ENCODE measurements at regions of chr15 and their contacts with region 1.

Region 1: GRCh38 chr15:78625606-78626280 is 4.9 kb upstream of the CHRNA3 start:
- DNase-seq: no peak
- H3K4me3 ChIP-seq: no peak overlapping the region
- H3K27ac ChIP-seq: no peak overlapping the region
- H3K4me1 ChIP-seq: no peaks in the 10 kb centered on the region
- H3K27me3 ChIP-seq: no peaks in the 10 kb centered on the region
- CTCF ChIP-seq: no peak
- EP300 ChIP-seq: no peak
- POLR2A ChIP-seq: no peak

Region 2: GRCh38 chr15:78702609-78703333 is 77.0 kb after region 1 on chr15:
- intact Hi-C with region 1: loop called in 2 of 4 experiments (anchors 5 to 10 kb)
- DNase-seq: no peak
- H3K4me3 ChIP-seq: no peak overlapping the region
- H3K27ac ChIP-seq: no peak overlapping the region
- H3K4me1 ChIP-seq: no peaks in the 10 kb centered on the region
- H3K27me3 ChIP-seq: no peaks in the 10 kb centered on the region
- CTCF ChIP-seq: no peak
- EP300 ChIP-seq: no peak
- POLR2A ChIP-seq: no peak

Region 3: DNA sequence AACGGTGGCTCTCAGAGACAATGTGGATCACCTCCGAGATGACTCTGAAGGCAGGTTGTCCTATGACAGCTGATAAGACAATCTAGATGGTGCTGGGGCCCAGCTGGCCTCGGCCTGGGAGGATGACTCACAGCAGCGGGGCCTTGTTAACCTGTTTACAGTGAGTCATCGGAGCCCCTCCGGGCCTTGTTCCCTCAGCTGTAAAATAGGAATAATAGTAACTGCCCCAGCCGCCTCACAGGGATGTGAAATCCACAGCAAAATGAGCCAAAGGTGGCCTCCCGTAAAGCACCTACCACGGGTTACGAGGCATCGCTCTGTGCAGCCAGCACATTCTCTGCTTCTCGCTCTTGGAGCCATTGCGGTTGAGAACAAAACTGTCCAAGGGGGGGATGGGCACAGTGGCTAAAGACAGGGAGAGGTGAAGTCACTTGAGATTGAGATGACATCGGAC is 553.4 kb after region 1 on chr15:
- intact Hi-C with region 1: loop called in 2 of 4 experiments (anchors 5 to 10 kb)
- DNase-seq: no peak
- H3K4me3 ChIP-seq: no peak overlapping the region
- H3K27ac ChIP-seq: no peak overlapping the region
- H3K4me1 ChIP-seq: no peaks in the 10 kb centered on the region
- H3K27me3 ChIP-seq: no peaks in the 10 kb centered on the region
- CTCF ChIP-seq: no peak
- EP300 ChIP-seq: no peak
- POLR2A ChIP-seq: no peak